ENCODE measurements at regions of chr17 and their contacts with region 1.

Region 1: GRCh38 chr17:50345432-50346312 is at the start of gene XYLT2:
- DNase-seq: peak; percentile 97
- ATAC-seq: peak; percentile 94
- H3K4me3 Mint-ChIP-seq: peak within 1 kb of the TSS; percentile 90
- H3K27ac Mint-ChIP-seq: peak within 1 kb of the TSS; percentile 89
- H3K4me1 Mint-ChIP-seq: peaks cover 24% of the 10 kb centered on the region
- H3K27me3 Mint-ChIP-seq: no peaks in the 10 kb centered on the region
- CTCF ChIP-seq: no peak
- total RNA-seq, gene XYLT2: 20.3 and 21.4 TPM in 2 replicates

Region 2: DNA sequence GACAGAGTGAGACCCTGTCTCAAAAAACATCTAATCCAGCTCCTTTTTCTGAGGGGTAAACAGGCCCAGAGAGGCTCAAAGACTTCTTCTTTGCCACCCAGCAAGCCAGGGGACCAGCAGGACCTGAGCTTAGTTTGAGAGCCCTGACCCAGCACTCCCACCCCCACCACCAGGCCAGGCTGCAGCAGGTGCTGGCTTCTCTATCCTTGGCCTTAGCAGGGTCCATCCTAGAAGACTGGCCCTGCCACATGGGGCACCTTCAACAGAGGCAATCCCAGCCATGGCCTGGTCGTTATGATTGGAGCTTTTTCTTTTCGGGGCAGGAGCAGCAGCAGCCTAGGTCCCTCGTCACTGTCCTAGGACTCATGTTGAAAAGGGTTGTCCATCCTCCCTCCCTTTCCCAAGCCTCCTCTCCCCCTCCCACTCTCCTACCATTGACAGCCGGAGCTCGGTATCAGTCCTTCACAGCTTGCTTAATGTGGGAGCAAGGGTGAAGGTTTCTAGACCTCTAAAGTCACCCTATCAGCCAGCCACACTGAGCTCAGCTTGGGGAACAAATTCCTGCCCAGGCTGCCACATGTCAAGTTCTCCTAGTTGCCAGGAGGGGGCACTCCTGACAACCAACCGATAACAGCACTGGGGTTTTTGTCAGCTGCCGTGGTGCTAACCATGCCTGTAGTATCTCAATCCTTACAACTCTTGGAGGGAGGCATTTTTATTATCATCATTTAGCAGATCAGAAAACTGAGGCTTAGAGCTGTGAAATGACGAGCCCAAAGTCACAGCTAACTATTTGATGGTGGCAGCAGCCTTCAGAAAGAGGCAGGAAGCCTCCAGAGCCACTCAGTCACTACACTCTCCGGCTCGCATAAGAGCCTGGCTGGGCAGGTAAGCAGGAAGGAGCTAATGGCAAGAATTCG is 16.1 kb after region 1 on chr17:
- CTCF ChIA-PET with region 1: interaction called, 21 read pairs
- POLR2A ChIA-PET with region 1: interaction called, 7 read pairs
- intact Hi-C with region 1: no loop called
- DNase-seq: no peak
- ATAC-seq: peak; percentile 97
- H3K4me3 Mint-ChIP-seq: no peak overlapping the region
- H3K27ac Mint-ChIP-seq: peak overlapping the region; percentile 70
- H3K4me1 Mint-ChIP-seq: peaks cover 7% of the 10 kb centered on the region
- H3K27me3 Mint-ChIP-seq: no peaks in the 10 kb centered on the region
- CTCF ChIP-seq: peak; percentile 30

Region 3: GRCh38 chr17:50372758-50373556 is 27.3 kb after region 1 on chr17 and contains the starts of genes EME1 and MRPL27:
- CTCF ChIA-PET with region 1: no interaction called
- POLR2A ChIA-PET with region 1: interaction called, 4 read pairs
- intact Hi-C with region 1: loop called (anchors 1 kb)
- DNase-seq: peak; percentile 85
- ATAC-seq: peak; percentile 93
- H3K4me3 Mint-ChIP-seq: peak within 1 kb of the TSS; percentile 99
- H3K27ac Mint-ChIP-seq: peak within 1 kb of the TSS; percentile 100
- H3K4me1 Mint-ChIP-seq: peaks cover 20% of the 10 kb centered on the region
- H3K27me3 Mint-ChIP-seq: no peaks in the 10 kb centered on the region
- CTCF ChIP-seq: no peak
- total RNA-seq, gene EME1: 3.1 and 3.6 TPM in 2 replicates
- total RNA-seq, gene MRPL27: 45.0 and 49.2 TPM in 2 replicates

Region 4: DNA sequence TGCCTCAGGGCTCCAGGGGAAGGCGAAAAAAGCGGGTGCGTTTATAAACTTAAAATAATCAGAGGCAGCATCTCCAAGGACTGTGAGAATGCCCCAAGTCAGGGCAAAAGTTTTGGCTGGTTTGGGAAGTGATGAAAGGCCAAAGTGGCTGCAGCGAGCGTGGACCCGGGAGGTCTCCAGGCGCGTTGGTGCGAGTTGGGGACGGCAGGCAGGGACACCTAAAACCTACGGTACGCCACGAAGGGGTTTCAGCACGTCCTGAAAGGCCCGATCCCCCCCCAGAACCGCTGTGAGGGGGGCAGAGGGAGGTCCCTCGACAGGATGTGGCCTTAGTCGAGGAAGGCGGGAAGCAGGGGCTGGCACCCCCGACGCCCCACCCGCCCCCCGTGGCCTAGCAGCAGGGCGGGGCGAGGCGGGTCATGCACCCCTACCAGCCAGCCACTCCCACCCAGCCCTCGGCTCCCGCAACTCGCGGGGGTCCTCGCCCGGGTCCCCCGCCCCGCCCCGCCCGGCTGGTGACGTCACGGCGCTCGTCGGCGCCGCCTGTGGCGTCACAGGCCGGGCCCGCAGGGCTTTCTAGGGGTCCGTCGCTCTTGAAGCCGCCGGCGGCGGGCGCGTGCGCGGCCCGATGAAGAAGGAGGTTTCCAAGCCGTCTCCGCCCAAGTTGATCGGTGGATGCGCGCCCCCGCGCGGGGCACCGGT is 162.3 kb after region 1 on chr17 and contains the start of gene MYCBPAP:
- CTCF ChIA-PET with region 1: no interaction called
- POLR2A ChIA-PET with region 1: no interaction called
- intact Hi-C with region 1: loop called (anchors 1 kb)
- DNase-seq: peak; percentile 77
- ATAC-seq: peak; percentile 82
- H3K4me3 Mint-ChIP-seq: peak within 1 kb of the TSS; percentile 89
- H3K27ac Mint-ChIP-seq: peak within 1 kb of the TSS; percentile 86
- H3K4me1 Mint-ChIP-seq: peaks cover 31% of the 10 kb centered on the region
- H3K27me3 Mint-ChIP-seq: no peaks in the 10 kb centered on the region
- CTCF ChIP-seq: no peak
- total RNA-seq, gene MYCBPAP: 2.1 and 2.3 TPM in 2 replicates

Region 5: GRCh38 chr17:50944054-50944901 is 598.6 kb after region 1 on chr17:
- CTCF ChIA-PET with region 1: no interaction called
- POLR2A ChIA-PET with region 1: no interaction called
- intact Hi-C with region 1: no loop called
- DNase-seq: no peak
- ATAC-seq: peak; percentile 57
- H3K4me3 Mint-ChIP-seq: peak overlapping the region; percentile 53
- H3K27ac Mint-ChIP-seq: no peak overlapping the region
- H3K4me1 Mint-ChIP-seq: peaks cover 9% of the 10 kb centered on the region
- H3K27me3 Mint-ChIP-seq: peaks cover 5% of the 10 kb centered on the region
- CTCF ChIP-seq: no peak